ENCODE measurements at regions of chr4 and their contacts with region 1.

Region 1: GRCh38 chr4:26263165-26263564 is 57.6 kb upstream of the RBPJ start:
- H3K4me3 Mint-ChIP-seq: no peak overlapping the region
- H3K27ac Mint-ChIP-seq: peak overlapping the region; percentile 57
- H3K4me1 Mint-ChIP-seq: peaks cover 69% of the 10 kb centered on the region
- H3K27me3 Mint-ChIP-seq: no peaks in the 10 kb centered on the region

Region 2: DNA sequence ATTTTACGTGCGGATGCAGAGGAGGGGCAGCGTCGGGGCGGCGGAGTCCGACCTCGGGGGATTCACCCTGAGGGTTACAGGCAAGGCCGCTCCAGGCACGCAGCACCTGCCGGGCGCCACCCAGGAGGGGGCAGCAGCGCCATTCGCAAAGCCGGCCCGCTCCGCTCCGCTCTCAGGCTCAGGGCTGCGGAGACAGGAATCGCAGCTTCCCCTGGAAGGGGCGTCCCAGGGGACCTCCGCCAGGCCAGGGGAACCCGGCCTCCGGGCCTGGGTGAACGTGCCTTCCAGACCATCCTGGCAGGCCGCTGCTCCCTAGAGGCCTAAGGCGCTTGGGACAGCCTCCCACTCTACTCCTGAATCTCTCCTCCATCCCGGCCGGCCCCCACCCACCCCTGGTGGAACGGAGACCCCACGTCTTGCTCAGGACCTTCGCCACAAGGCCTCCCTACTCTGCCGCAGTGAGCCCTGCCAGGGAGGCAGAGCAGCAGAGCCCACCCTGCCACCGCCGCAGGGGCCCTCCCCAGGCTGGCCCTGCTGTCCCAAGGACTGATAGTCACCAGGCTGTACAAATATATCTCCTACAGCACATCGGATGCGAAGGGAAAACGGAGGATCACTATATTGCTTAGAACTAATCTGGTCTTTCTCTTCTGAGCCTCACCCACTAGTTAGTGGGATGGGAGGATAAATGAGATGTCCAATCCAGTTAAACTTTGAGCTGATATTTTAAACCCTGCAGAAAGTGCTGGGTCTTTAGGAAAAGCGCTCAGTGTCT is 234.2 kb before region 1 on chr4:
- intact Hi-C with region 1: no loop called
- H3K4me3 Mint-ChIP-seq: peak overlapping the region; percentile 44
- H3K27ac Mint-ChIP-seq: peak overlapping the region; percentile 67
- H3K4me1 Mint-ChIP-seq: peaks cover 66% of the 10 kb centered on the region
- H3K27me3 Mint-ChIP-seq: peaks cover 2% of the 10 kb centered on the region

Region 3: GRCh38 chr4:26161030-26161824 is 101.9 kb before region 1 on chr4:
- intact Hi-C with region 1: loop called (anchors 5 kb)
- H3K4me3 Mint-ChIP-seq: no peak overlapping the region
- H3K27ac Mint-ChIP-seq: peak overlapping the region; percentile 83
- H3K4me1 Mint-ChIP-seq: peaks cover 62% of the 10 kb centered on the region
- H3K27me3 Mint-ChIP-seq: no peaks in the 10 kb centered on the region

Region 4: DNA sequence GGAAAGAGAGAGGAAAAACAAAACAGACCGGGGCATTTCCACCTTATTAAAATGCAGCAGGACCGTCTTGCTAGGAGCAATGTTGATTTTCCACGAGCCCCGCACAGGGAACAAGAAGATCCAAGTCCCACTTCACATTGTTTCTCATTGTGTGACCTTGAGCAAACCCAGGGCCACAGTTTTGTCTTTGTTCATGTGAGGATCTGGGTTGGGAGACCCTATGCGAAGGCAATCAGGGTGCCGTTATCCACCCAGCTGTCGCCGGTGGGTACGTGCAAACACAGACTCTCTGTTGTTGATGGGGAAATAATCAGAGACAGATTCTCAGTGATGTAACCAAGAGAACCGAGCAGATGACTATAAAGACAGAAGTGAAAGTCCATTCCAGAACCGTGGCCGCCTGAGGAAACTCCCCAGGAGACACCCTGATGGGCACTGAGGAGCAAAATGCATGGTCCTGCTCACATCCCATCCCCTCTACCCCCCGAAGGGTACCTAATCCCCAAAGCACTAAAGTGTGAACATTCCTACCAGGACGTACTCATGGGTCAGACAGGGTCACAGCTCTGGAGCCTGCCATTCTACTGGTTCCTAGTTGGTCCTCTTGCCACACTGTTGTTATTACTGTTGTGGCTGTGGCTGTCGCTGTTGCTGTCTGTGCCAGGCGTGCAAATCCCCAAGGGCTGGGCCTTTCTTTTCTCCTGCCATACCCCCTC is 45.0 kb before region 1 on chr4:
- intact Hi-C with region 1: loop called (anchors 5 kb)
- H3K4me3 Mint-ChIP-seq: peak overlapping the region; percentile 58
- H3K27ac Mint-ChIP-seq: peak overlapping the region; percentile 95
- H3K4me1 Mint-ChIP-seq: peaks cover 79% of the 10 kb centered on the region
- H3K27me3 Mint-ChIP-seq: peaks cover 2% of the 10 kb centered on the region

Region 5: GRCh38 chr4:26372525-26373172 is 109.5 kb after region 1 on chr4:
- intact Hi-C with region 1: no loop called
- H3K4me3 Mint-ChIP-seq: no peak overlapping the region
- H3K27ac Mint-ChIP-seq: peak overlapping the region; percentile 46
- H3K4me1 Mint-ChIP-seq: peaks cover 61% of the 10 kb centered on the region
- H3K27me3 Mint-ChIP-seq: peaks cover 7% of the 10 kb centered on the region

Region 6: DNA sequence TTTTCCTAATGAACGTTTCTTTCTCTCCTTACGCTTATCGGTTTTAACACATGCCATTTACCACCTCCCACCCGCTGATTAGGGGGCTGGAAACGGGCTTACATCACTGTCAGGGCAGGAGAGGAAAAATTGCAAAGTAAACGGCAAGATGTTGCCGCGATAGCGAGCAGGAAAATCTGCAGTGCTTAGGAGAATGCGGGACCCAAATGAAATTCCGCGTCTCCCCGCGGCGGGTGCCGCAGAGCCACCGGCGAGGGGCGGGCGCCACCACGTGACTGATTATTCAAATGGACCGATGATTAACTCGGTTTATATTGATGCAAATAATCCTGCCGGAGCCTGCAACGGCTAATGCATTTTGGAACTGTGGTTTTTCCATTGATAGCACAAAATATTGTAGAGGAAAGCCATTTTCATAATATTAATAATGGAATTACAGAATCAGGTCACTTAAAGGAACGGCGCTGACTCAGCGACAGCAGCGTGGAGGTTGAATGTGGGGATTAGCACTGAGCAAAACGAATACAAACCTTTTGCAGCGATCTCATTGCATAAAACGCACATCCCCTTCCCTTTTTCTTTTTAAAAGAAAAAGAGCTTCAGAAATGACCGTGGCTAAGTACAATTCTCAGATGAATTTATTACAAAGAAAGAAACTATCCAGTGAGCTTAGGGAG is 821.7 kb after region 1 on chr4:
- intact Hi-C with region 1: no loop called
- H3K4me3 Mint-ChIP-seq: peak overlapping the region; percentile 45
- H3K27ac Mint-ChIP-seq: no peak overlapping the region
- H3K4me1 Mint-ChIP-seq: peaks cover 82% of the 10 kb centered on the region
- H3K27me3 Mint-ChIP-seq: peaks cover 64% of the 10 kb centered on the region

Measured in dendritic cell treated with granulocyte-macrophage colony-stimulating factor and Interleukin-4, amounts not matched to agents 40 ng/mL and 50 ng/mL, for 4 days (primary cell).